ENCODE measurements at regions of chr12 and their contacts with region 1.

Region 1: DNA sequence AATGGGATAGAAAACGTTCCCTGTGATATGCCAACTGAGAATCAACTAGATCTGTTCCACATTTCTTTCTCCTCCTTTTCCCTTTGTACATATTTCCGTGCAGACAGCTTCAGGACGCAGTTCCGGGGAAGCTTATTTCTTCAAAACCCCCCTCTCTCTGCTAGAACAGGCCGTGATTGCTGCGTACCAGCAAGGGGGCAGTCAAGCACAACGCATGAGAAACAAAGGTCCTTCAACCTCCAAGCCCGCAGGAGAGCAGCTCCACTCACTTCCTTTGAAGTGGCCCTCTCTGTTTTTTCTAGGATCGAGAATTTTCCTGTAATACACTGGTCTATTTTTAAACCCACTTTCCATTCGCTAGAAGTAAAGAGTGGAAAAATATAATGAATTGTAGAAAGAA is 80.8 kb downstream of the ZNF664 start:
- DNase-seq: peak; percentile 12
- ATAC-seq: peak; percentile 67
- H3K4me3 ChIP-seq: no peak overlapping the region
- H3K27ac ChIP-seq: no peak overlapping the region
- H3K4me1 ChIP-seq: no peaks in the 10 kb centered on the region
- H3K27me3 ChIP-seq: no peaks in the 10 kb centered on the region
- CTCF ChIP-seq: peak; percentile 49 to 60 (median 49)
- POLR2A ChIP-seq: no peak
- RAD21 ChIP-seq: peak; percentile 79

Region 2: GRCh38 chr12:123761841-123762714 is 291.8 kb before region 1 on chr12 and contains the start of gene DNAH10:
- CTCF ChIA-PET with region 1: no interaction called
- POLR2A ChIA-PET with region 1: no interaction called
- RAD21 ChIA-PET with region 1: no interaction called
- intact Hi-C with region 1: no loop called
- DNase-seq: no peak
- ATAC-seq: no peak; the same call in 1 of the 2 replicates
- H3K4me3 ChIP-seq: no peak within 1 kb of the TSS
- H3K27ac ChIP-seq: no peak within 1 kb of the TSS
- H3K4me1 ChIP-seq: no peaks in the 10 kb centered on the region
- H3K27me3 ChIP-seq: no peaks in the 10 kb centered on the region
- CTCF ChIP-seq: no peak
- POLR2A ChIP-seq: no peak
- RAD21 ChIP-seq: no peak
- total RNA-seq, gene DNAH10: 1.3 TPM

Region 3: DNA sequence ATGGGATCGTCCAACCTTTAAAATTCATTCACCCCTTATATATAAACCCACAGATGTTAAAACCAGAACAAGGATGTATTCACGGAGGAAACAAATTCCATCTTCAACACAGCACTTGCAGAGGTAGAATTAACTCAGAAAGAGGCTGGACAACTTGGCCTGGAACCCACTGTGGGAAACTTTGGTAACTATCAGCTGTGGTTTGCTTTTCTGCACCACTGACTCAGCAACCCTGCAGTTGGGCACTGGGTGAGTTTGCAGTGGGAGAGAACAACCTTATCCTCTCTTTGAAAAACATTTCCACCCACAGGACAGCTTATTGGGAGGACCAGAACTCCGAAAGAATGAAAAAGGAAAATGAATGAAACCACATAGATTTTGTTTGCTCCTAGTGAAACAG is 14.6 kb before region 1 on chr12:
- CTCF ChIA-PET with region 1: no interaction called
- POLR2A ChIA-PET with region 1: no interaction called
- RAD21 ChIA-PET with region 1: no interaction called
- intact Hi-C with region 1: no loop called
- DNase-seq: no peak
- ATAC-seq: no peak
- H3K4me3 ChIP-seq: no peak overlapping the region
- H3K27ac ChIP-seq: no peak overlapping the region
- H3K4me1 ChIP-seq: no peaks in the 10 kb centered on the region
- H3K27me3 ChIP-seq: no peaks in the 10 kb centered on the region
- CTCF ChIP-seq: no peak
- POLR2A ChIP-seq: no peak
- RAD21 ChIP-seq: no peak

Region 4: DNA sequence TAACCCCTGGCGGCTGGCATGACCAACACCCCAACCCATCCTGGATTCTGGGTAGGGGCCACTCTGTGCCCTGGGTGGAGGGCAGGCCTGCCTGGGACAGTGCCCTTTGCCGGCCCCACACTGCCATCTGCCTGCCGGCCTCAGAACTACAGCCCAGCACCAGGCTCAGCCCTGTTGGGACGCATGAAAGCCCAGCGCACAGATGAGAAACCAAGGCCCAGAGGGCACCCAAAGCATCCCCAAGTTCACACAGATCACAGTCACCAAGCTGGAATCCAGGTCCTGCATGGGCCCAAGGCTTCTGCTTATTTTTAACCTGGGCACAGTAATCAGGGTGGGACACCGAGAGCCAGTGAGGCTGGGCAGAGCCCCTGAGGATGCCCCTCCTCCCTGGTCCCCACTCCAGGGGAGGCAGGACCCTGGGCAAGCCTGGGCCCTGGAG is 267.2 kb after region 1 on chr12:
- CTCF ChIA-PET with region 1: interaction called, 6 read pairs
- POLR2A ChIA-PET with region 1: no interaction called
- RAD21 ChIA-PET with region 1: no interaction called
- intact Hi-C with region 1: loop called (anchors 5 kb)
- DNase-seq: no peak
- ATAC-seq: peak; percentile 95
- H3K4me3 ChIP-seq: no peak overlapping the region
- H3K27ac ChIP-seq: no peak overlapping the region
- H3K4me1 ChIP-seq: no peaks in the 10 kb centered on the region
- H3K27me3 ChIP-seq: no peaks in the 10 kb centered on the region
- CTCF ChIP-seq: peak; percentile 80 to 94 (median 94)
- POLR2A ChIP-seq: no peak
- RAD21 ChIP-seq: peak; percentile 96